CD4-positive, alpha-beta memory T cell (primary cell): ENCODE measurements at regions of chr7 and their contacts with region 1.

Region 1: DNA sequence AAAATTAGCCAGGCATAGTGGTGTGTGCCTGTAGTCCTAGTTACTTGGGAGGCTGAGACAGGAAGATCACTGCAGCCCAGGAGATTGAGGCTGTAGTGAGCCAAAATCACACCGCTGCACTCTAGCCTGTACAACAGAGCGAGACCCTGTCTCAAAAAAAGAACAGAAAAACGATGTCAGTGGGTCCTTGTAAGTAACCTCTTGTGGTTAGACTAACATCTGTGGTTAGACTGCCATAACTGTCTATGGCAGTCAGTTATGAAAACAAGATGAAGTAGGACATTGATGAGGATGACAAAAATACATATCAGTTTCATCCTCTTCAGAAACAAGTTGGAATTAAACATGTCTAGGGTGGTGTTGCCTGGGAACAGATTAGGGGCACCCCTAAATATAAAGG is 53.3 kb downstream of the AKAP9 start:
- DNase-seq: no peak
- H3K4me3 ChIP-seq: no peak overlapping the region
- H3K4me3 Mint-ChIP-seq: no peak overlapping the region
- H3K27ac ChIP-seq: no peak overlapping the region
- H3K27ac Mint-ChIP-seq: no peak overlapping the region
- H3K4me1 ChIP-seq: no peaks in the 10 kb centered on the region
- H3K4me1 Mint-ChIP-seq: peaks cover 0 to 8% (median 1%) of the 10 kb centered on the region in 4 donors
- H3K27me3 ChIP-seq: no peaks in the 10 kb centered on the region
- H3K27me3 Mint-ChIP-seq: no peaks in the 10 kb centered on the region

Region 2: DNA sequence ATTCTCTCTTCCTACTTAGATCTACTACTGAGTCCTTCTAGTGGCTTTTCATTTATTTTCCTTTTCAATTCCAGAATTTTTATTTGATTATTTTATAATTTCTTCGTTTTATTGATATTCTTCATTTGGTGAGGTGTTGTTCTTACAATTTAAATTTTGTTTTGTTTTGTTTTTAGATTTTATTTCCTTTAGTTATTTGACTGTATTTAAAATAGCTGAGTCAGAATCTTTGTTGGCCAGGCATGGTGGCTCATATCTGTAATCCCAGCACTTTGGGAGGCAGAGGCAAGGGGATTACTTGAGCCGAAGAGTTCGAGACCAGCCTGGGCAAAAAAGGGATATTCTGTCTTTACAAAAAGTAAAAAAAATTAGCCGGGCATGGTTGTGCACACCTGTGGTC is 17.2 kb before region 1 on chr7:
- CTCF ChIA-PET with region 1: no interaction called
- POLR2A ChIA-PET with region 1: no interaction called
- intact Hi-C with region 1: loop called (anchors 1 kb)
- DNase-seq: no peak
- H3K4me3 ChIP-seq: no peak overlapping the region
- H3K4me3 Mint-ChIP-seq: no peak overlapping the region
- H3K27ac ChIP-seq: no peak overlapping the region
- H3K27ac Mint-ChIP-seq: peak overlapping the region in 1 of 7 donors; percentile 37
- H3K4me1 ChIP-seq: no peaks in the 10 kb centered on the region
- H3K4me1 Mint-ChIP-seq: peaks cover 2 to 18% (median 7%) of the 10 kb centered on the region in 4 donors
- H3K27me3 ChIP-seq: no peaks in the 10 kb centered on the region
- H3K27me3 Mint-ChIP-seq: no peaks in the 10 kb centered on the region

Region 3: DNA sequence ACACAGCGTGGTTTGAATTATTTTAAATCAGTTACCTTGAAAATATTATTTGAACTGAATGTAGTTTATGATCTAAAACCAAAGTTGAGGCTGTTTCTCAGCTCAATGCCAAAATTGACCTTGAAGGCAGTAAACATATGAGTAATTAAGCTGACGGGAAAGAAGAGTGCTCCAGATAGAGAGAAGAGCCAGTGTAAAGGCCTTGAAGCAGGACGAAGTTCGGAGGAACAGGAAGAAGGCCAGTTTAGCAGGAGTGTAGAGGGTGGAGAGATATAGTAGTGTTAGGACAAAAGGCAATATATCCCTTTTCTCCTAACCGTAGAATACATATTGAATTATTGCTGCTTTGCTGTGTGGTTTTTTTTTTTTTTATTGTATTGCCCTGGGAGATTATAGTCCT is 77.1 kb after region 1 on chr7:
- CTCF ChIA-PET with region 1: no interaction called
- POLR2A ChIA-PET with region 1: no interaction called
- intact Hi-C with region 1: no loop called
- DNase-seq: no peak
- H3K4me3 ChIP-seq: no peak overlapping the region
- H3K4me3 Mint-ChIP-seq: peak overlapping the region in 1 of 8 donors; percentile 4
- H3K27ac ChIP-seq: no peak overlapping the region
- H3K27ac Mint-ChIP-seq: peak overlapping the region in 2 of 7 donors; percentile 0 to 33
- H3K4me1 ChIP-seq: no peaks in the 10 kb centered on the region
- H3K4me1 Mint-ChIP-seq: peaks cover 0 to 4% (median under 1%) of the 10 kb centered on the region in 4 donors
- H3K27me3 ChIP-seq: no peaks in the 10 kb centered on the region
- H3K27me3 Mint-ChIP-seq: no peaks in the 10 kb centered on the region